OCI-LY7 (cell line): ENCODE measurements at regions of chr7 and their contacts with region 1.

Region 1: DNA sequence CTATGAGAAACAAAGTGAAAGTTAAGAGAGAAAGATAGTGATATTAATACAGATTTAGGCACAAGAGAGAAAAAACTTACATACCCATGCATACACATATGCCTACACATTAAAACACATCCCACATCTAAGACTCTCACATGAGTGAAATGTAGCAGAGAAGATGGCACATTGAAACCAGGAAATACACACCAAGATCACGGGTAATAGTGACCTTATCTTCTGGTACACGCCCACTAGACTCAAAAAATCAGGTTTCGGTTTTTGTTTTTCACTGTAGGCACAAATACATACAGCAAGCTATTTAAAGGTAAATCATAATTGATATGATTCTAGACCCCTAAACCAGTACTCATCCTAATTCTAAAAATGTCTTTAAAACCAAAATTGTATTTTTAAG is 225.2 kb upstream of the TAC1 start:
- DNase-seq: no peak
- H3K4me3 ChIP-seq: no peak overlapping the region
- H3K27ac ChIP-seq: no peak overlapping the region
- H3K4me1 ChIP-seq: no peaks in the 10 kb centered on the region
- CTCF ChIP-seq: no peak

Region 2: GRCh38 chr7:97565665-97566064 is 58.9 kb after region 1 on chr7:
- CTCF ChIA-PET with region 1: no interaction called
- POLR2A ChIA-PET with region 1: no interaction called
- intact Hi-C with region 1: no loop called
- DNase-seq: no peak
- H3K4me3 ChIP-seq: no peak overlapping the region
- H3K27ac ChIP-seq: no peak overlapping the region
- H3K4me1 ChIP-seq: no peaks in the 10 kb centered on the region
- CTCF ChIP-seq: no peak

Region 3: GRCh38 chr7:97835296-97836138 is 328.8 kb after region 1 on chr7:
- CTCF ChIA-PET with region 1: no interaction called
- POLR2A ChIA-PET with region 1: no interaction called
- intact Hi-C with region 1: loop called (anchors 10 kb)
- DNase-seq: peak; percentile 71
- H3K4me3 ChIP-seq: no peak overlapping the region
- H3K27ac ChIP-seq: no peak overlapping the region
- H3K4me1 ChIP-seq: no peaks in the 10 kb centered on the region
- CTCF ChIP-seq: peak; percentile 89